K562 (cell line): ENCODE measurements at regions of chr7 and their contacts with region 1.

Region 1: DNA sequence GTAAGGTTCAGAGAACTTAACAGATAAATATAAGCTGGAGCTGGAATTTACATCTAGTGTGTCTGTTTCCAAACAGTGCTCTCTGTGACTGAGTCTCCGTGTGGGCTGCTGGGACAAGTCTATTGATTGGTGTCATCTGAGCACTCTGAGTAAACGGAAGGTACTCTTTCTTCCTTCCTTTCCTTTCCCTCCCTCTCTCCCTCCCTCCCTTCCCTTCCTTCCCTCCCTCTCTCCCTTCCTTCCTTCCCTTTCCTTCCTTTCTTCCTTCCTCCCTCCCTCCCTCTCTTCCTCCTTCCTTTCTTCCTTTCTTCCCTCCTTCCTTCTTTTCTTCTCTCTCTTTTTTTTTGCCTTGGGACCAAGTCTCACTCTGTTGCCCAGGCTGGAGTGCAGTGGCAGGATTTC is 61.8 kb downstream of the ANKRD61 start:
- DNase-seq: no peak
- ATAC-seq: peak; percentile 67
- H3K4me3 ChIP-seq: no peak overlapping the region
- H3K27ac ChIP-seq: no peak overlapping the region
- H3K4me1 ChIP-seq: no peaks in the 10 kb centered on the region; a peak in 1 of 5 replicates
- H3K27me3 ChIP-seq: peaks cover 0 to 6% of the 10 kb centered on the region in 2 experiments; a peak in 1 of 5 replicates
- CTCF ChIP-seq: no peak
- EP300 ChIP-seq: no peak
- POLR2A ChIP-seq: no peak
- RAD21 ChIP-seq: no peak

Region 2: GRCh38 chr7:6078548-6078947 is 14.4 kb before region 1 on chr7:
- CTCF ChIA-PET with region 1: no interaction called
- POLR2A ChIA-PET with region 1: no interaction called
- in situ Hi-C with region 1: no loop called
- intact Hi-C with region 1: loop called (anchors 2 kb)
- DNase-seq: no peak
- ATAC-seq: no peak
- H3K4me3 ChIP-seq: no peak overlapping the region
- H3K27ac ChIP-seq: no peak overlapping the region
- H3K4me1 ChIP-seq: peaks cover 0 to 12% of the 10 kb centered on the region in 2 experiments; a peak in 2 of 5 replicates
- H3K27me3 ChIP-seq: no peaks in the 10 kb centered on the region
- CTCF ChIP-seq: no peak
- EP300 ChIP-seq: no peak
- POLR2A ChIP-seq: no peak
- RAD21 ChIP-seq: no peak

Region 3: DNA sequence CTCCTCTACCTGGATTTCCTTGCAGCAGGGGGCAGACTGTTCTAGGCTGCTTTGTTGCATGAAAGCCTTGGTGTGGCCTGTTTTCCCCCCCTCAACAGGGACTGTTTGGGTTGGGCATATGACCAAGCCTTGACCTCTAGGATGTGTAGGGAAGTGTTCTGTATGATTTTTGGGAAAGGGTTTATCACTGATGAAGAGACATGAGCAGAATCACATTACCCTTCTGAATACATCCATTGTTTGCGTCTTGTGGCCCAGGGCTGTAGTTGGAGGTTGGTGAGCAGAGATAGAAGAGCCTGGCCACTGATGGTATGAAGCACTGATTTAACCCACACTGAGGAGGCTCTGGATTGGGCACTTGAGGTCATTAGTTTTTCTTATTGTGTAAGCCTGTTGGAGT is 587.2 kb after region 1 on chr7:
- CTCF ChIA-PET with region 1: no interaction called
- POLR2A ChIA-PET with region 1: no interaction called
- in situ Hi-C with region 1: no loop called
- intact Hi-C with region 1: no loop called
- DNase-seq: no peak
- ATAC-seq: no peak
- H3K4me3 ChIP-seq: no peak overlapping the region
- H3K27ac ChIP-seq: no peak overlapping the region
- H3K4me1 ChIP-seq: no peaks in the 10 kb centered on the region
- H3K27me3 ChIP-seq: no peaks in the 10 kb centered on the region
- CTCF ChIP-seq: no peak
- EP300 ChIP-seq: no peak
- POLR2A ChIP-seq: no peak
- RAD21 ChIP-seq: no peak